MCF 10A (cell line): ENCODE measurements at regions of chr6 and their contacts with region 1.

Region 1: GRCh38 chr6:27753668-27754407 is 158.4 kb downstream of the OR2B2 start:
- DNase-seq: peak; percentile 93
- H3K4me3 Mint-ChIP-seq: peak overlapping the region; percentile 80
- H3K27ac Mint-ChIP-seq: peak overlapping the region; percentile 59
- H3K4me1 Mint-ChIP-seq: peaks cover 11% of the 10 kb centered on the region
- H3K27me3 Mint-ChIP-seq: no peaks in the 10 kb centered on the region
- CTCF ChIP-seq: no peak

Region 2: GRCh38 chr6:27213544-27214125 is 540.2 kb before region 1 on chr6:
- CTCF ChIA-PET with region 1: interaction called, 3 read pairs
- POLR2A ChIA-PET with region 1: no interaction called
- intact Hi-C with region 1: loop called (anchors 10 kb)
- DNase-seq: peak; percentile 68
- H3K4me3 Mint-ChIP-seq: peak overlapping the region; percentile 88
- H3K27ac Mint-ChIP-seq: no peak overlapping the region
- H3K4me1 Mint-ChIP-seq: no peaks in the 10 kb centered on the region
- H3K27me3 Mint-ChIP-seq: no peaks in the 10 kb centered on the region
- CTCF ChIP-seq: no peak

Region 3: GRCh38 chr6:27472617-27473400 is 281.0 kb before region 1 on chr6 and contains the start of gene ZNF184:
- CTCF ChIA-PET with region 1: no interaction called
- POLR2A ChIA-PET with region 1: interaction called, 5 read pairs
- intact Hi-C with region 1: loop called (anchors 5 kb)
- DNase-seq: peak; percentile 98
- H3K4me3 Mint-ChIP-seq: peak within 1 kb of the TSS; percentile 91
- H3K27ac Mint-ChIP-seq: peak within 1 kb of the TSS; percentile 83
- H3K4me1 Mint-ChIP-seq: peaks cover 25% of the 10 kb centered on the region
- H3K27me3 Mint-ChIP-seq: no peaks in the 10 kb centered on the region
- CTCF ChIP-seq: peak; percentile 17
- total RNA-seq, gene ZNF184: 8.9 and 10.1 TPM in 2 replicates

Region 4: GRCh38 chr6:27592481-27593199 is 161.2 kb before region 1 on chr6:
- CTCF ChIA-PET with region 1: no interaction called
- POLR2A ChIA-PET with region 1: interaction called, 6 read pairs
- intact Hi-C with region 1: loop called (anchors 5 kb)
- DNase-seq: peak; percentile 82
- H3K4me3 Mint-ChIP-seq: no peak overlapping the region
- H3K27ac Mint-ChIP-seq: no peak overlapping the region
- H3K4me1 Mint-ChIP-seq: no peaks in the 10 kb centered on the region
- H3K27me3 Mint-ChIP-seq: no peaks in the 10 kb centered on the region
- CTCF ChIP-seq: no peak

Region 5: DNA sequence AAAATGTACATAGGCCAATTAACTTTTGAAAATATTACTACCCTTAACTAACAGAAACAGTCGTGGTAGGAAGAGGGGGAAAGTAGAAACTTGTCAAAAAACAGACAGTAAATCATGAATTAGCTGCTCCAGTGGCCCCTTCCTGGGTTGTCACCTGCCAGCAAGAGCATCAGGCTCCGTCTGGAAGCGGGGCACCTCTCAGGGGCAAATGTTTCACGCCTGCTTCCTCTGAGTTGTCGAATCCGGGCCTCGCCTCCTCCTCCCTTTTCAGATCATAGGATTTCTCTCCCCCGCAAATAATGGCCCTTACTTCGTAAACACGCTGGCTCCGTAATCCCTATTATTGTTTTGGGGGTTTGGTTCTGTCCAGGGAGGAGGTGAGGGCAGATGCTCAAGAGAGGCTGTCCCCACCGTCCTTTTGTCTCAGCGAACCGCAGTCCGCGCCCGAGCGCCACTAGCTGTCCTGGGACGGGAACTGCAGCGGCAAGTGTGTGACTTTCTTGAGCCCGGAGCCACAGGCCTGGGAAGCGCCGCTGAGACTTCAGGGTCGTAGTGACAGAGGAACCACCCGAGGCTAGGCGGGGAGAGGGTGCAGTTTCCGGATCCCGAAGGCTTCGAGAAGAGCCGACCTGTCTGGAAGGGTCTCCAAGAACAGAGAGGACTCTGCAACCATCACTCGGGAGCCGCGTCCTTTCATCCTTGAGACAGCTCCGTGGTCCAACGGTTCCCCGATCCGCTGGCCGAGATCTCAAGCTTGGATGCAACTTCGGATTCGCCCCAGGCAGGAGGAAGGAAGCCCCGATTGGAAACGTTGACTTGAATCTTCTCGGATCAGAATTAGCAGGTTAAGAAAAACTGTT is 66.5 kb before region 1 on chr6:
- CTCF ChIA-PET with region 1: interaction called, 4 read pairs
- POLR2A ChIA-PET with region 1: interaction called, 12 read pairs
- intact Hi-C with region 1: loop called (anchors 2 kb)
- DNase-seq: peak; percentile 87
- H3K4me3 Mint-ChIP-seq: peak overlapping the region; percentile 92
- H3K27ac Mint-ChIP-seq: peak overlapping the region; percentile 89
- H3K4me1 Mint-ChIP-seq: peaks cover 5% of the 10 kb centered on the region
- H3K27me3 Mint-ChIP-seq: no peaks in the 10 kb centered on the region
- CTCF ChIP-seq: peak; percentile 86